IMR-90 (cell line): ENCODE measurements at regions of chr1 and their contacts with region 1.

Region 1: DNA sequence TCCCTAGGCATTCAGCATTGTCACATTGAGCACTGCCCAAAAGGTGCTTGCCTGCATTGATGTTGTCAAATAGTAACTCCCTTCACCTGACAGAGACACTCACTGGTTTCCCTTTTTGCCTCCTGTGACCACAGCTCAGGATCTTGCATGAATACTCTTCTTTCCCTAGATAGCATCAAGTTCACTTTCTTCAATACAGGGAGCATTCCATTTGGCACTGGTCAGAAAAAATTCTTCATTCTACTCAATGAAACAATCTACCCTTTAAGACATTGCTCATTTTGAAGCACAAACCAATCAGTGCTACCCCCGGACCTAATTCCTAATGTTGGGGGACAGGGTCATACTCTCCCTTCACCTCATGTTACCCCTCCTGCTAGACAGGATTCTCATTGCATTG is 319.0 kb upstream of the SNX7 start:
- DNase-seq: peak; percentile 59
- ATAC-seq: peak; percentile 79
- H3K4me3 ChIP-seq: no peak overlapping the region
- H3K27ac ChIP-seq: no peak overlapping the region
- H3K4me1 ChIP-seq: no peaks in the 10 kb centered on the region; the same call in 1 of the 2 replicates
- H3K27me3 ChIP-seq: no peaks in the 10 kb centered on the region
- CTCF ChIP-seq: no peak
- POLR2A ChIP-seq: no peak
- RAD21 ChIP-seq: no peak

Region 2: GRCh38 chr1:97636941-97637340 is 705.6 kb before region 1 on chr1:
- CTCF ChIA-PET with region 1: no interaction called
- POLR2A ChIA-PET with region 1: interaction called, 15 read pairs
- dilution Hi-C with region 1: no loop called
- in situ Hi-C with region 1: no loop called
- intact Hi-C with region 1: no loop called
- DNase-seq: no peak
- ATAC-seq: no peak
- H3K4me3 ChIP-seq: no peak overlapping the region
- H3K27ac ChIP-seq: no peak overlapping the region
- H3K4me1 ChIP-seq: peaks cover 2% of the 10 kb centered on the region; the same call in 1 of the 2 replicates
- H3K27me3 ChIP-seq: no peaks in the 10 kb centered on the region
- CTCF ChIP-seq: no peak
- POLR2A ChIP-seq: no peak
- RAD21 ChIP-seq: no peak

Region 3: GRCh38 chr1:98783821-98784220 is 441.3 kb after region 1 on chr1:
- CTCF ChIA-PET with region 1: no interaction called
- POLR2A ChIA-PET with region 1: no interaction called
- dilution Hi-C with region 1: no loop called
- in situ Hi-C with region 1: no loop called
- intact Hi-C with region 1: no loop called
- DNase-seq: no peak
- ATAC-seq: no peak
- H3K4me3 ChIP-seq: no peak overlapping the region
- H3K27ac ChIP-seq: no peak overlapping the region
- H3K4me1 ChIP-seq: no peaks in the 10 kb centered on the region
- H3K27me3 ChIP-seq: no peaks in the 10 kb centered on the region
- CTCF ChIP-seq: no peak
- POLR2A ChIP-seq: no peak
- RAD21 ChIP-seq: no peak